ENCODE measurements at regions of chr5 and their contacts with region 1.

Region 1: GRCh38 chr5:109741390-109741789 is 51.7 kb downstream of the MAN2A1 start:
- DNase-seq: no peak
- H3K4me3 ChIP-seq: no peak overlapping the region
- H3K27me3 ChIP-seq: no peaks in the 10 kb centered on the region
- CTCF ChIP-seq: no peak

Region 2: DNA sequence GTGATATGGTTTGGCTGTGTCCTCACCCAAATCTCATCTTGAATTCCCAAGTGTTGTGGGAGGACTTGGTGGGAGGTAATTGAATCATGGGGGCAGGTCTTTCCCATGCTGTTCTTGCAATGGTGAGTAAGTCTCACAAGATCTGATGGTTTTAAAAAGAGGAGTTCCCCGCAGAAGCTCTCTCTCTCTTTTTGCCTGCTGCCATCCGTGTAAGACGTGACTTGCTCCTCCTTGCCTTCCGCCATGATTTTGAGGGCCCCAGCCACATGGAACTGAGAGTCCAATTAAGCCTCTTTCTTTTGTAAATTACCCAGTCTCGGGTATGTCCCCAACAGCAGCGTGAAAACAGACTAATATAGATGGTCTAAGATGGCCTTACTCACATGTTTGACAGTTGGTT is 1569.6 kb before region 1 on chr5:
- CTCF ChIA-PET with region 1: no interaction called
- POLR2A ChIA-PET with region 1: interaction called, 13 read pairs
- DNase-seq: no peak
- H3K4me3 ChIP-seq: no peak overlapping the region
- H3K27me3 ChIP-seq: no peaks in the 10 kb centered on the region
- CTCF ChIP-seq: no peak

Region 3: GRCh38 chr5:109759306-109759705 is 17.9 kb after region 1 on chr5:
- CTCF ChIA-PET with region 1: no interaction called
- POLR2A ChIA-PET with region 1: no interaction called
- DNase-seq: no peak
- H3K4me3 ChIP-seq: no peak overlapping the region
- H3K27me3 ChIP-seq: no peaks in the 10 kb centered on the region
- CTCF ChIP-seq: no peak

Measured in BJ (cell line).